ENCODE measurements at regions of chr17 and their contacts with region 1.

Region 1: GRCh38 chr17:32486111-32486700 is 587 bp upstream of the CDK5R1 start:
- DNase-seq: peak; percentile 55 to 82 (median 76)
- ATAC-seq: peak; percentile 87
- H3K4me3 ChIP-seq: no peak overlapping the region
- H3K4me3 Mint-ChIP-seq: peak overlapping the region; percentile 62 to 87 (median 80)
- H3K27ac ChIP-seq: peak overlapping the region; percentile 45
- H3K27ac Mint-ChIP-seq: peak overlapping the region in 8 of 9 donors; percentile 30 to 89 (median 84)
- H3K4me1 ChIP-seq: peaks cover 15 to 35% of the 10 kb centered on the region in 2 donors
- H3K4me1 Mint-ChIP-seq: peaks cover 15 to 53% (median 43%) of the 10 kb centered on the region in 7 donors
- H3K27me3 ChIP-seq: no peaks in the 10 kb centered on the region
- H3K27me3 Mint-ChIP-seq: no peaks in the 10 kb centered on the region

Region 2: GRCh38 chr17:32341857-32342602 is 144.2 kb before region 1 on chr17 and contains the start of gene C17orf75:
- CTCF ChIA-PET with region 1: no interaction called
- POLR2A ChIA-PET with region 1: no interaction called
- intact Hi-C with region 1: no loop called
- DNase-seq: peak; percentile 63 to 81 (median 76)
- ATAC-seq: peak; percentile 92
- H3K4me3 ChIP-seq: peak within 1 kb of the TSS; percentile 64
- H3K4me3 Mint-ChIP-seq: peak within 1 kb of the TSS; percentile 83 to 94 (median 92)
- H3K27ac ChIP-seq: peak within 1 kb of the TSS; percentile 80
- H3K27ac Mint-ChIP-seq: peak within 1 kb of the TSS; percentile 83 to 96 (median 93)
- H3K4me1 ChIP-seq: peaks cover 5 to 9% of the 10 kb centered on the region in 2 donors
- H3K4me1 Mint-ChIP-seq: peaks cover 19 to 33% (median 25%) of the 10 kb centered on the region in 7 donors
- H3K27me3 ChIP-seq: no peaks in the 10 kb centered on the region
- H3K27me3 Mint-ChIP-seq: no peaks in the 10 kb centered on the region
- total RNA-seq, gene C17orf75: 14.2 to 22.0 (median 17.9) TPM

Region 3: DNA sequence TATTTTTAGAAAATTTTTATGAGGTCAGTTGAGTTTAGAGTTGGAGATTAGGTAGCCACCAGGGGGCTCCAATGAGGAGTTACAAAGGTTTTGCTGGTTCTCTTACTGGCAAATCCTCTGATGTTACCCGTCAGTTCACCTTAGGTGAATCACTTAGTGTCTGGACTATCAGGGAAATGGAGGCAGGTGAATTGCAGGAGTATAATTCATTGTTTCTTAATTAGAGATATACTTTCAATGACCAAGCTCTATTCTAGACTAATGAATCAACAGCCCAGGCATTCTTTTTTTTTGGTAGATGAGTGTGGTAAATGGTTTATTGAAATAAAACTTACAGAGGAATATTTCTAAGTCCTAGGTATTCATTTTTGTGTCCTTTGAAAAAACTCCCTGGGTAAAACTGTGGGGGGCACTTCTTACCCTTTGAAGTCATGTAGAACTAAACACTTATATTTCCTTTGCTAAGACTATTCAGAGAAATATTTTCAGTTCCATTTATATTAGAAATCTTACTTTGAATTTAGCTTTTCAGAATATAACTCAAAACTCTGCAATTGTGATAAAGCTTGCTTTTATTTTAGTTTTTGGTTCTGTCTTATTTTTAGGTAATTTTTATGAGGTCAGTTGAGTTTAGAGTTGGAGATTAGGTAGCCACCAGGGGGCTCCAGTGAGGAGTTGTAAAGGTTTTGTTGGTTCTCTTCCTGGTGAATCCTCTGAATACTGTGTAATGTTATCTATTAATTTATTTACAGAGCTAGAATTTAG is 24.2 kb before region 1 on chr17:
- CTCF ChIA-PET with region 1: interaction called, 31 read pairs
- POLR2A ChIA-PET with region 1: interaction called, 5 read pairs
- intact Hi-C with region 1: loop called in 1 of 2 experiments (anchors 1 kb)
- DNase-seq: peak; percentile 27 to 71 (median 63)
- ATAC-seq: peak; percentile 91
- H3K4me3 ChIP-seq: no peak overlapping the region
- H3K4me3 Mint-ChIP-seq: peak overlapping the region in 1 of 10 donors; percentile 15
- H3K27ac ChIP-seq: no peak overlapping the region
- H3K27ac Mint-ChIP-seq: peak overlapping the region in 7 of 9 donors; percentile 0 to 87 (median 19)
- H3K4me1 ChIP-seq: peaks cover 8 to 9% of the 10 kb centered on the region in 2 donors
- H3K4me1 Mint-ChIP-seq: peaks cover 25 to 43% (median 31%) of the 10 kb centered on the region in 7 donors
- H3K27me3 ChIP-seq: no peaks in the 10 kb centered on the region
- H3K27me3 Mint-ChIP-seq: no peaks in the 10 kb centered on the region

Region 4: DNA sequence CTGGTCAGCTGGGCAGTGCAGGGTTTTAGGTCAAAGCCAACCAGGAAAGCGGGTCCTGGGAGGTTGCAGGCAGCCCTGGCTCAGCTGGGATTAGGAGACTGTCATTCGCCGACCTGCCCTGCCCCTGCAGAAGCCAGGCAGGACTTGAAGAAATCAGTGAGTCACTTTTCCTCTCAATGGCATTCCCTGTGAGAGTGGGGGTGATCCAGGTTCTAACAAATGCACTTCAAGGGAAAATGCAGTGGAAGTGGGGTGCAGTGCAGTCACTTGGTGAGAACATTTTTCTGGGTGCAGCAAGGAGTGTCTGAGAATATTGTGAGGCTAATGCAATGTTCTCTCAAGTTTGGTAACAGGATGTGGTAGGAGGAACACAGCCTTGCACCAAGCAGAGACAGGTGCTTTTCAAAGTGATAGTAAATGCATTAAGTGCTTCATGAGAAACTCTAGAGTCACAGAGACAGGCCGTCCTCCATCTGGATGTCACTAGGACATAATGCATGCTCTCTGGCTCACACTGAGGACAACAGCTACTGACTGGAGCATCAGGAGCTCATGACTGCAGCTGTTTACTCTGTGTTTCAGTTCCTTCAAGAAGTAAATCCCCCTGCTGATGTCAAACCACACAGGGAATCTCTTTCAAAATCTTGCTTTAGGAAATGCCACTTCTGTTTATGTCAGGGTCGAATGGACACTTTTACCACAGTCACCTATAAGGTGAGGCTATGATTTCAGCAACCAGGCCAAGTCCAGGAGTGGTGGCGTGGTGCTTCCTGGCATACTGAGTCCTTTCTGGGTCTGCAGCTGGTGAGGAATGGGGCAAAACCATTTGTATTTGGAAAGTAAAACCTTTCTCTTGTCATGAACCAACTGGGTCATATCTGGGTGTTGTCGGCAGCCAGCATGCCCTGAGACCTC is 17.3 kb after region 1 on chr17:
- CTCF ChIA-PET with region 1: interaction called, 16 read pairs
- POLR2A ChIA-PET with region 1: interaction called, 382 read pairs
- intact Hi-C with region 1: loop called in 1 of 2 experiments (anchors 1 kb)
- DNase-seq: peak in 8 of 9 donors; percentile 45 to 83 (median 78)
- ATAC-seq: peak; percentile 94
- H3K4me3 ChIP-seq: peak overlapping the region; percentile 36
- H3K4me3 Mint-ChIP-seq: peak overlapping the region; percentile 64 to 83 (median 73)
- H3K27ac ChIP-seq: peak overlapping the region; percentile 70
- H3K27ac Mint-ChIP-seq: peak overlapping the region; percentile 93 to 100 (median 98)
- H3K4me1 ChIP-seq: peaks cover 45 to 70% of the 10 kb centered on the region in 2 donors
- H3K4me1 Mint-ChIP-seq: peaks cover 50 to 91% (median 77%) of the 10 kb centered on the region in 7 donors
- H3K27me3 ChIP-seq: no peaks in the 10 kb centered on the region
- H3K27me3 Mint-ChIP-seq: no peaks in the 10 kb centered on the region

Region 5: DNA sequence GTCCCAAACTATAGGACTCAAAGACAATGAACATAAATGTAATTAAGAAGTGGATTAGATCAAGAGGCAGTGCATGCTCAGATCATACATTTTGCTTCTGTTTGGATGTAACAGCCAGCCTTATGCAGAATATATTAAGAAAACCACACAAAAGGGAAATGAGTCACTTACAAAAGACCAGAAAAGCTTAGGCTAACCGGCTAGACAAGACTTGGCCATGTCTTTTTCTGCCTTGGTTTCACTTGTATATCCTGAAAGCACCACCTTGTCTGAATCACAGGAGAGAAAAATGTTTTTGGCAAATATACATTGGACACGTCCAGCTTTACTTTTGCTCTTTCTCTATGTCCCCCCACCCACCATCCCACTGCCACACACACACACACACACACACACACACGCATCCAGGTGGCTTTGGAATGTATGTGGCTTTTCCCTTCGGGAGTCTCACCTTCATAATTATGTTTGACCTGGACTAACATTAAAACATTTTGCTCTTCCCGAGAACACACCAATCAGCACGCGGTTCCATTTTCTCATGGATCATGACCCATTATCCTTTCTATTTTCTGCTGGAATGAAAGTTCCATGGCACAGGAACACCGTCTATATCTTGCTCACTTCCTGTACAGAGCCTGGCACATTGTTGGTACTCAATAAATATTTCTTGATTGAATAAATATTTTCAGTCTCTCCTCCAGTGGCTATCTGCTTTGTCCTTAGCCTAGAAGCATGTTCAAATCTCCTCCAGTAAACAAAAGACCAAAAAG is 65.2 kb after region 1 on chr17:
- CTCF ChIA-PET with region 1: interaction called, 5 read pairs
- POLR2A ChIA-PET with region 1: interaction called, 4 read pairs
- intact Hi-C with region 1: loop called in 1 of 2 experiments (anchors 10 kb)
- DNase-seq: no peak
- ATAC-seq: peak; percentile 37
- H3K4me3 ChIP-seq: no peak overlapping the region
- H3K4me3 Mint-ChIP-seq: peak overlapping the region in 1 of 10 donors; percentile 76
- H3K27ac ChIP-seq: no peak overlapping the region
- H3K27ac Mint-ChIP-seq: peak overlapping the region in 2 of 9 donors; percentile 48 to 57
- H3K4me1 ChIP-seq: peaks cover 11 to 12% of the 10 kb centered on the region in 2 donors
- H3K4me1 Mint-ChIP-seq: peaks cover 18 to 52% (median 41%) of the 10 kb centered on the region in 7 donors
- H3K27me3 ChIP-seq: no peaks in the 10 kb centered on the region
- H3K27me3 Mint-ChIP-seq: no peaks in the 10 kb centered on the region

Region 6: DNA sequence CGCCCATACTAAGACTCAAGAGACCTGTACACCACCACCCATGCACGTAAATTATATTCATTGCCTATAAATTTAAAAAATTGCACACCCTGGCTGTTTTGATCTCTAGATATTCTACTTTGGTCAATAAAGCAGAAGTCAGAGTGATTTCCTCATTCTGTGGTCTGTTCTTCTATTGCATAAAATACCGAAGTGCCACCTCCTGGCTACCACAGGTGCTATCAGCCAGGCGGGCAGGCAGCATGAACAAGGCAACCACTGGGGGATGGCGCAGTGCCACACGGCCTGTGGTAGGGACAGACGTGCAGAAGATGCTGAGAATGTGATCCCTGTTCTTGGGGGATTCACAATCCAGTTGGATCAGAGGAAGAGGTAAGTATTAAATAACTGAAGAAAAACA is 122.9 kb after region 1 on chr17:
- CTCF ChIA-PET with region 1: interaction called, 66 read pairs
- POLR2A ChIA-PET with region 1: interaction called, 11 read pairs
- intact Hi-C with region 1: loop called (anchors 1 kb)
- DNase-seq: peak; percentile 48 to 81 (median 72)
- ATAC-seq: peak; percentile 100
- H3K4me3 ChIP-seq: no peak overlapping the region
- H3K4me3 Mint-ChIP-seq: no peak overlapping the region
- H3K27ac ChIP-seq: no peak overlapping the region
- H3K27ac Mint-ChIP-seq: peak overlapping the region in 2 of 9 donors; percentile 0 to 14
- H3K4me1 ChIP-seq: no peaks in the 10 kb centered on the region
- H3K4me1 Mint-ChIP-seq: peaks cover 6 to 9% (median 8%) of the 10 kb centered on the region in 7 donors
- H3K27me3 ChIP-seq: no peaks in the 10 kb centered on the region
- H3K27me3 Mint-ChIP-seq: peaks cover 0 to 6% (median 0%) of the 10 kb centered on the region in 5 donors

Region 7: GRCh38 chr17:32755045-32755805 is 269.0 kb after region 1 on chr17:
- CTCF ChIA-PET with region 1: interaction called, 5 read pairs
- POLR2A ChIA-PET with region 1: no interaction called
- intact Hi-C with region 1: loop called in 1 of 2 experiments (anchors 1 kb)
- DNase-seq: peak in 7 of 9 donors; percentile 33 to 64 (median 57)
- ATAC-seq: peak; percentile 94
- H3K4me3 ChIP-seq: no peak overlapping the region
- H3K4me3 Mint-ChIP-seq: no peak overlapping the region
- H3K27ac ChIP-seq: no peak overlapping the region
- H3K27ac Mint-ChIP-seq: no peak overlapping the region
- H3K4me1 ChIP-seq: peaks cover 7% of the 10 kb centered on the region in 2 donors
- H3K4me1 Mint-ChIP-seq: peaks cover 5 to 13% (median 12%) of the 10 kb centered on the region in 7 donors
- H3K27me3 ChIP-seq: no peaks in the 10 kb centered on the region
- H3K27me3 Mint-ChIP-seq: no peaks in the 10 kb centered on the region